Activated naive CD4-positive, alpha-beta T cell treated with anti-CD3 and anti-CD28 coated beads, Interleukin-2, amount 10 ng/mL, durations not matched to agents 7 days and 5 days (primary cell): ENCODE measurements at regions of chr4 and their contacts with region 1.

Region 1: GRCh38 chr4:76179398-76180318 is 31.5 kb upstream of the NUP54 start:
- DNase-seq: peak; percentile 88
- H3K4me3 Mint-ChIP-seq: no peak overlapping the region
- H3K27ac Mint-ChIP-seq: no peak overlapping the region
- H3K4me1 Mint-ChIP-seq: no peaks in the 10 kb centered on the region
- H3K27me3 Mint-ChIP-seq: no peaks in the 10 kb centered on the region

Region 2: GRCh38 chr4:75995727-75996126 is 183.9 kb before region 1 on chr4:
- CTCF ChIA-PET with region 1: interaction called, 11 read pairs
- DNase-seq: no peak
- H3K4me3 Mint-ChIP-seq: no peak overlapping the region
- H3K27ac Mint-ChIP-seq: no peak overlapping the region
- H3K4me1 Mint-ChIP-seq: peaks cover 8% of the 10 kb centered on the region
- H3K27me3 Mint-ChIP-seq: peaks cover 4% of the 10 kb centered on the region

Region 3: GRCh38 chr4:76125816-76126215 is 53.8 kb before region 1 on chr4:
- CTCF ChIA-PET with region 1: no interaction called
- DNase-seq: no peak
- H3K4me3 Mint-ChIP-seq: no peak overlapping the region
- H3K27ac Mint-ChIP-seq: no peak overlapping the region
- H3K4me1 Mint-ChIP-seq: no peaks in the 10 kb centered on the region
- H3K27me3 Mint-ChIP-seq: no peaks in the 10 kb centered on the region

Region 4: GRCh38 chr4:76198411-76199237 is 19.0 kb after region 1 on chr4:
- CTCF ChIA-PET with region 1: interaction called, 11 read pairs
- DNase-seq: peak; percentile 25
- H3K4me3 Mint-ChIP-seq: no peak overlapping the region
- H3K27ac Mint-ChIP-seq: no peak overlapping the region
- H3K4me1 Mint-ChIP-seq: peaks cover 32% of the 10 kb centered on the region
- H3K27me3 Mint-ChIP-seq: no peaks in the 10 kb centered on the region

Region 5: DNA sequence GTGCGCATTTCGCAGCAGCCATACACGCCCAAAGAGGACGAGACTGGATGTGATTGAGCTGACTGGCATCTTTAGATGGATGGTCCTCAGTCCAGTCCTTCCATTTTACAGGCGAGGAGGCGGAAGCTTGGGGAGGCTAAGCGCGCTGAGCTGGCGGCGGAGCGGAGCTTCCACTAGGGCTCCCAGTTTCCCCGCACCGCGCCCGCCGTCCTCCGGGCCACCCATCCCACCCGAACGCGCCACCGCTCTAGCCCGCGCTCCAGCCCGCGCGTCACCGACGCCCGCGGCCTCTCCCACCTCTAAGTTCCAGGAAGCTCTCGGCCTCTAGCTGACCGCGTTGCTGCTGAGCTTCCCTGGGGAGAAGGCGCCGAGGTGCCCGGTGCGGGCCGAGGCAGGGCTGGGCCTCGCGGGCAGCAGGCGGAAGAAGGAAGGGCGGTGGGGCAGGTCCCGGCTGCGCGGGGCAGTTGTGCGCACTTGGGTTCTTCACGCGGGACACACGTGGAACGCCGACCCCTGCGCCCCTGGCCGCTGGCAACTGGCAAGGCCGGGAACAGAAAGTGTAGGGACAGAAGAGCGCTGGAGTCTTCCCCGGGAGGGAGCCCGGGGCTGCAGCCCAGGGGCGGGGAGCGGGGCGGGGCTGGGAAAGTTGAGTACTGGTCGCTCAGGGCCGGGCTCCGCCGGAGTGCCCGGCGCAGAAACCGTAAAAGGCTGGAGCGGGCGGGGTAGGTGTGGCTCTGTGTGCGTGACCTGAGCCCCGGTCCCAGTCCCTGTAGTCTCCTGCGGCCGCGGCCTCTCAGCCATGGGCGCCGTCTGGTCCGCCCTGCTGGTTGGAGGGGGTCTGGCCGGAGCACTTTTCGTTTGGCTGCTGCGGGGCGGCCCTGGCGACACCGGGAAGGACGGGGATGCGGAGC is 126.6 kb after region 1 on chr4 and contains the start of gene STBD1:
- CTCF ChIA-PET with region 1: interaction called, 17 read pairs
- DNase-seq: peak; percentile 59
- H3K4me3 Mint-ChIP-seq: peak within 1 kb of the TSS; percentile 74
- H3K27ac Mint-ChIP-seq: peak within 1 kb of the TSS; percentile 78
- H3K4me1 Mint-ChIP-seq: peaks cover 48% of the 10 kb centered on the region
- H3K27me3 Mint-ChIP-seq: peaks cover 38% of the 10 kb centered on the region

Region 6: DNA sequence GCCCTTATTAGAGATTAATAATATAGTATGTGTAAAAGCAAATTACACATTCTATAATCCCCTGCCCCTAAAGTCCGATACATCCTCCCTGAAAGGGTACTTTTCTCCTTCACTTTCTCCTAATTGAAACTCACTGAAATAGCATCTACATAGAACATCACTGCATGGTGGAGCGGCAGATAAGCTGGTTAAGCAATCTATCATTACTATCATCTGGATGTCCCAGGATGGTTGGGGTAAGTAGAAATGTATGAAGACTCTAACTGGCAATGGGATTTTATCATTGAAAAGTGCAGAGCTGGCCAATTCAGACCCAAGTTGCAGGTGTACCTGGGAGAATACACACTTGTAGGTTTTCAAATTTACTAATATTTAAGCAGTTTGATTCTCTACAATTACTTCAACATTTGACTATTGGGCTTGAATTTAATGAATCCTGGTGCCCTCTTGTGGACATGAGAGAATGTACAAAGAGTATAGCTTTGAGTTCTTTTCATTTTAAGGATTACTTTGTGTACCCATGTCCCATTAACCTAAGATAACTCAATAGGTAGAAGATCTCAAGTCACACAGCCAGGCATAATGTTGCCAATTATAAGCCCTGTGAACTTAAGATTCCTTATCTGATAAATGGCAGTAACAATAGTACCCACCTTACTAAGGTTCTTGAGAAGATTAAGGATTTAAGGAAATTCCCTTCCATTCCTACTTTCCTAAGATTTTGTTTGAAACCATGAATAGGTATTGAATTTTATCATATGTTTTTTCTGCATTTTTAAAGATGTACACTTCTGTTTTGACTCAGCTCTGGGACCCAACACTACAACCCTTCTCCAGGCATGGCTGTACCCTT is 325.2 kb after region 1 on chr4:
- CTCF ChIA-PET with region 1: interaction called, 33 read pairs
- DNase-seq: no peak
- H3K4me3 Mint-ChIP-seq: no peak overlapping the region
- H3K27ac Mint-ChIP-seq: no peak overlapping the region
- H3K4me1 Mint-ChIP-seq: no peaks in the 10 kb centered on the region
- H3K27me3 Mint-ChIP-seq: peaks cover 13% of the 10 kb centered on the region